HEK293 (cell line): ENCODE measurements at regions of chr7 and their contacts with region 1.

Region 1: GRCh38 chr7:16645593-16646471 is at the starts of genes ANKMY2 and BZW2:
- H3K4me3 ChIP-seq: peak within 1 kb of the TSS; percentile 98
- H3K27ac ChIP-seq: peak within 1 kb of the TSS; percentile 85
- H3K4me1 ChIP-seq: 0 out of 2 replicates have a peak, but pooled peaks cover 7% of the 10 kb centered on the region
- CTCF ChIP-seq: no peak

Region 2: DNA sequence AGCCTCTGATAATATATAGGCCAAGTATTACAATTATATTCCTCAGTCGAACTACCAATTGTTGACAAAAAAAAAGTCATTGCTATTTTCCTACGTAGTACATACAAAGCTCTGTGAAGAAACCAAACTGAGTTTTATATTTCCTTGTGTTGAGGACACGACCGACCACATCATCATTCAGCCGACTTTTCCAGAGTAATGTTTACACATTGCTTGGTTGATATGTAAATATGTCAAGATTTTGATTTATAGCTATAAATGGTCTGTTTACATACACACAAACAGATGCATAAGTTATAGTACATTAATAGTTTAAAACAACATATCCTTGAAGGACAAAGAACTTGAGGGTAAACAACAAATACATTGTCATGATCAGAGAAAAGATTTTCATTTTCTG is 346.0 kb before region 1 on chr7:
- CTCF ChIA-PET with region 1: no interaction called
- POLR2A ChIA-PET with region 1: interaction called, 10 read pairs
- H3K4me3 ChIP-seq: no peak overlapping the region
- H3K27ac ChIP-seq: no peak overlapping the region
- H3K4me1 ChIP-seq: no peaks in the 10 kb centered on the region
- CTCF ChIP-seq: no peak

Region 3: DNA sequence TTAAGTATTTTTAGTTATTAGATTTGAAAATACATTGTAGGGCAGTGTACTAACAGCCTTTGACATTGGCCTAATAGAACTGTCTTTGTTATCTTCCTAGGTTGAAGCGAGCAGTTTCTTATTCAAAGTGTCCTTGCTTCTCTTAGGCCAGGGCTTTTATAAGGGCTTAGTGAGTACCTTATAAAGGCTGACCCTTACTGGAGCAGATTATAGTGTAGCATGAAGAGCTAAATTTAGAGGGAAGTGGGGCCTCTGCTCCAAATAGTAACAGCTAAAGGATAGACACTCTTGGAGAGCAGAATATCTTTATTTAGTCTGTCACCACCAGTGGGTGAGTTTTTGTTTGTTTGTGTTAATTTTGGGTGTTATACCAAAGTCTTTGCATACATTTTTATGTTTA is 16.1 kb after region 1 on chr7:
- CTCF ChIA-PET with region 1: interaction called, 3 read pairs
- POLR2A ChIA-PET with region 1: interaction called, 11 read pairs
- H3K4me3 ChIP-seq: no peak overlapping the region
- H3K27ac ChIP-seq: no peak overlapping the region
- H3K4me1 ChIP-seq: peaks cover 7% of the 10 kb centered on the region
- CTCF ChIP-seq: no peak